HCT116 (cell line): ENCODE measurements at regions of chr16 and their contacts with region 1.

Region 1: GRCh38 chr16:2422123-2422867 is 7.0 kb upstream of the CCNF start:
- DNase-seq: no peak
- ATAC-seq: no peak
- H3K4me3 ChIP-seq: no peak overlapping the region
- H3K27ac ChIP-seq: no peak overlapping the region
- H3K4me1 ChIP-seq: peaks cover 3 to 16% of the 10 kb centered on the region in 2 experiments; a peak in 2 of 4 replicates
- H3K27me3 ChIP-seq: no peaks in the 10 kb centered on the region
- CTCF ChIP-seq: no peak
- POLR2A ChIP-seq: no peak
- RAD21 ChIP-seq: no peak

Region 2: GRCh38 chr16:2340564-2341455 is 81.5 kb before region 1 on chr16 and contains the start of gene ABCA3:
- CTCF ChIA-PET with region 1: no interaction called
- POLR2A ChIA-PET with region 1: no interaction called
- RAD21 ChIA-PET with region 1: no interaction called
- intact Hi-C with region 1: loop called (anchors 2 kb)
- DNase-seq: peak; percentile 87
- ATAC-seq: peak; percentile 95
- H3K4me3 ChIP-seq: peak within 1 kb of the TSS; percentile 59 to 70
- H3K27ac ChIP-seq: peak within 1 kb of the TSS; percentile 53; the same call in 1 of the 2 replicates
- H3K4me1 ChIP-seq: peaks cover 0 to 15% of the 10 kb centered on the region in 2 experiments; a peak in 2 of 4 replicates
- H3K27me3 ChIP-seq: no peaks in the 10 kb centered on the region
- CTCF ChIP-seq: peak; percentile 97 to 99 (median 98)
- POLR2A ChIP-seq: peak; percentile 32
- RAD21 ChIP-seq: peak; percentile 78
- total RNA-seq, gene ABCA3: 5.4 TPM

Region 3: GRCh38 chr16:2371421-2371820 is 50.9 kb before region 1 on chr16:
- CTCF ChIA-PET with region 1: no interaction called
- POLR2A ChIA-PET with region 1: no interaction called
- RAD21 ChIA-PET with region 1: no interaction called
- intact Hi-C with region 1: no loop called
- DNase-seq: no peak
- ATAC-seq: no peak
- H3K4me3 ChIP-seq: no peak overlapping the region
- H3K27ac ChIP-seq: no peak overlapping the region
- H3K4me1 ChIP-seq: peaks cover 5 to 13% of the 10 kb centered on the region in 2 experiments; a peak in 2 of 4 replicates
- H3K27me3 ChIP-seq: no peaks in the 10 kb centered on the region
- CTCF ChIP-seq: no peak
- POLR2A ChIP-seq: no peak
- RAD21 ChIP-seq: no peak